Mammary epithelial cell (primary cell): ENCODE measurements at regions of chr10 and their contacts with region 1.

Region 1: GRCh38 chr10:125231116-125231812 is 70.9 kb upstream of the CTBP2 start:
- DNase-seq: peak; percentile 84
- H3K4me3 ChIP-seq: no peak overlapping the region
- H3K27ac ChIP-seq: peak overlapping the region; percentile 61
- H3K4me1 ChIP-seq: peaks cover 39% of the 10 kb centered on the region
- H3K27me3 ChIP-seq: no peaks in the 10 kb centered on the region
- CTCF ChIP-seq: peak in 1 of 2 donors; percentile 28

Region 2: DNA sequence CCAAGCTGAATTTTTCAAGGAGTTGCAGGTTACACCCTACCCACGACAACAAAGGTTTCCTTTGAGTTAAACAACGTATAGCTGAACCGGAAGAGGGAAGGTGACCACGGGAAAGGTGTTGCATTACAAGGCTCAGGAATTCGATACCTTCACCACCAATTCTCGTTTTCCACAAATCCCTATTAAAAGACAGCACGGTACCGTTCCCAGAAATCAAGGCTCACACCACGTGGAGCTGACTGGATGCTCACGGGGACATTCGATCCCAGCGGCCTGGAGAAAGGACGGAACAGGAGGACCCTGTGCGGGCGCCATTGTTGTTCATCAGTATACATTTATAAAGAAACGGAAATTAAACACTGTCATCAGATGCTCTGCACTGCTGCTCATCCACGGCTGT is 127.3 kb before region 1 on chr10:
- CTCF ChIA-PET with region 1: no interaction called
- dilution Hi-C with region 1: no loop called
- in situ Hi-C with region 1: no loop called
- intact Hi-C with region 1: no loop called
- DNase-seq: no peak
- H3K4me3 ChIP-seq: no peak overlapping the region
- H3K27ac ChIP-seq: no peak overlapping the region
- H3K4me1 ChIP-seq: peaks cover 12% of the 10 kb centered on the region
- H3K27me3 ChIP-seq: no peaks in the 10 kb centered on the region
- CTCF ChIP-seq: no peak

Region 3: GRCh38 chr10:125201108-125201524 is 30.1 kb before region 1 on chr10:
- CTCF ChIA-PET with region 1: no interaction called
- dilution Hi-C with region 1: loop called (anchors 5 kb)
- in situ Hi-C with region 1: no loop called
- intact Hi-C with region 1: loop called (anchors 1 kb)
- DNase-seq: peak; percentile 92
- H3K4me3 ChIP-seq: no peak overlapping the region
- H3K27ac ChIP-seq: no peak overlapping the region
- H3K4me1 ChIP-seq: peaks cover 21% of the 10 kb centered on the region
- H3K27me3 ChIP-seq: no peaks in the 10 kb centered on the region
- CTCF ChIP-seq: no peak